H1 (cell line): ENCODE measurements at regions of chr1 and their contacts with region 1.

Region 1: DNA sequence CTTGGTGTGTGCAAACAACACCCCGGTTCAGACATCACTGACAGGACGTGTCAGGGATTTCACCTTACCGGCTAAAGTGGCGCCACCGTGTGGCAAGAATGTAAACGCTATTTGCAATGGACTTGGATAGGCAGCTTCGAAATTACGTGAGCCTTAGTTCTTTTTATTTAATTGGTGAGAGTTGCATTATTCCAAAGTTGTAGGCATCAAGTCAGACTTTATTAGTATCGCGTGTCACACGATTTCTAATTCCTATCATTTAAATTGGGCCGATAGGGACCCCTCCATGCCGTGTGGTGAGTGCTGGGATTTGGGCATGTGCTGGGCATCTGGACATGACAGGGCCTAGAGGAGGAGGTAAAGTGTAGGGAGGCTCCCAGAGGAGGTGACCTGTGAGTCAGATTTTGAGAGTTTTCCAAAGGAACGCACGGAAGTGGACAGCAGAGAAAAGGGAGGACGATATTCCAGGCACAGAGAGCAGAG is 14.5 kb upstream of the CPT2 start:
- DNase-seq: peak; percentile 29 to 95
- H3K4me3 ChIP-seq: no peak overlapping the region
- H3K27ac ChIP-seq: no peak overlapping the region
- H3K4me1 ChIP-seq: no peaks in the 10 kb centered on the region; a peak in 1 of 7 replicates
- H3K27me3 ChIP-seq: no peaks in the 10 kb centered on the region; a peak in 3 of 7 replicates
- CTCF ChIP-seq: peak; percentile 70 to 92 (median 74)
- EP300 ChIP-seq: no peak
- POLR2A ChIP-seq: no peak
- RAD21 ChIP-seq: peak; percentile 61 to 77

Region 2: DNA sequence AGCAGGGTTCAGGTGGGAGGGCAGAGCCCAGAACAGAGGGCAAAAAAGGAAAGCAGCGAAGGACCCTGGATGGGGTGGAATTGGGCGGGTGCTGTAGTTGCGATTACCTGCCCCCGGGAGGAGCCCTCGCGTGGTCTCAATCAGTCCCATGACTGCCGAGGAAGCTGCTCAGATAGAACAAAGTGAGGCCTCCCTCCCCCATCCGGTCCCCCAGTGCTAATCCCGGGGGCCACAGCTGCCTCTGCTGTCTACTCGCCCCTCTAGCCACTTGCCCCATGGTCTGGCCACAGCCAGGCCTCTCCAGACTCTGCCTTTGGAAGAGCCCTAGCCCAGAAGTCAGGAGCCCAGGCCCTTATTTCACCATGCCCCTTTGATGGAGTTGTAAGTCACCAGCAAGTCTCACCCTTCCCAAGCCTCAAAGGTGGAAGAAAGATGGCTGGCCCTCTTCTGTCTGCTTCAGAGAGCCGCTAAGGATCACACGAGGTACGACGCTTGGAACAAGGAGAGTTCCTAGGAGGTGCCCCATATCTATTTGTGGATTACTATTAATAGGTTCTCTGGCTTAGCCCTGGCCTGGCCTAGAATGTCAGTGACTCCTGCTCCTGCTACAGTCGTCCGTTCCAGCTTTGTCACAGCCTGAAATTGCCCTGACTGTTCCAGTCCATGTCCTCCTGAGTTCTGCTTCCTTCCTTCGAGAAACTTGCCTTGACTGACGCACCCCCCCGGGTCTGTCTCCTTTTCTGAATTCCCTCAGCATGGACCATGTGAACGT is 277.0 kb before region 1 on chr1:
- CTCF ChIA-PET with region 1: interaction called, 19 read pairs
- POLR2A ChIA-PET with region 1: no interaction called
- DNase-seq: peak; percentile 38 to 81
- H3K4me3 ChIP-seq: no peak overlapping the region
- H3K27ac ChIP-seq: no peak overlapping the region
- H3K4me1 ChIP-seq: peaks cover 0 to 10% (median 3%) of the 10 kb centered on the region in 4 experiments; a peak in 5 of 7 replicates
- H3K27me3 ChIP-seq: no peaks in the 10 kb centered on the region
- CTCF ChIP-seq: peak; percentile 68 to 77 (median 72)
- EP300 ChIP-seq: no peak
- POLR2A ChIP-seq: no peak
- RAD21 ChIP-seq: peak; percentile 67 to 70

Region 3: DNA sequence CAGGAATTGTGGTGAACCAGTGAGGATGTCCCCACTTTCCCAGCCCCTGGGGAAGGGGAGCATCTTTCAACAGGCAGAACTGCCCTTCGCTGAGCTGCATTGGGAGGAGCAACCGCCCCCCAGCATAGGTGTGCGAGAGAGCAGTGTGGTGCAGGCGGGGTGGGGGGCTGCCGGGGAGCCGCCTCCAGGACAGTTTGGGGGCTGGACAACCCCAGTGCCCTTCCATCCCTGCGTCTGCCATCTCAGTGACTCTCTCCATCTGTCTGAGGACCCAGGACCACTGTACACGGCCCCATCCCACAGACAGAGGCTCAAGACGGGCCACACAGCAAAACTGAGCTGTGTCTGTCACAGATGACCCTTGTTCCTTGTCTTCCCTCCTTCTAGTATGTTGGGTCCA is 106.0 kb before region 1 on chr1:
- CTCF ChIA-PET with region 1: interaction called, 11 read pairs
- POLR2A ChIA-PET with region 1: no interaction called
- DNase-seq: no peak
- H3K4me3 ChIP-seq: no peak overlapping the region
- H3K27ac ChIP-seq: no peak overlapping the region
- H3K4me1 ChIP-seq: peaks cover 0 to under 1% (median 0%) of the 10 kb centered on the region in 4 experiments; a peak in 2 of 7 replicates
- H3K27me3 ChIP-seq: no peaks in the 10 kb centered on the region
- CTCF ChIP-seq: no peak
- EP300 ChIP-seq: no peak
- POLR2A ChIP-seq: no peak
- RAD21 ChIP-seq: no peak

Region 4: DNA sequence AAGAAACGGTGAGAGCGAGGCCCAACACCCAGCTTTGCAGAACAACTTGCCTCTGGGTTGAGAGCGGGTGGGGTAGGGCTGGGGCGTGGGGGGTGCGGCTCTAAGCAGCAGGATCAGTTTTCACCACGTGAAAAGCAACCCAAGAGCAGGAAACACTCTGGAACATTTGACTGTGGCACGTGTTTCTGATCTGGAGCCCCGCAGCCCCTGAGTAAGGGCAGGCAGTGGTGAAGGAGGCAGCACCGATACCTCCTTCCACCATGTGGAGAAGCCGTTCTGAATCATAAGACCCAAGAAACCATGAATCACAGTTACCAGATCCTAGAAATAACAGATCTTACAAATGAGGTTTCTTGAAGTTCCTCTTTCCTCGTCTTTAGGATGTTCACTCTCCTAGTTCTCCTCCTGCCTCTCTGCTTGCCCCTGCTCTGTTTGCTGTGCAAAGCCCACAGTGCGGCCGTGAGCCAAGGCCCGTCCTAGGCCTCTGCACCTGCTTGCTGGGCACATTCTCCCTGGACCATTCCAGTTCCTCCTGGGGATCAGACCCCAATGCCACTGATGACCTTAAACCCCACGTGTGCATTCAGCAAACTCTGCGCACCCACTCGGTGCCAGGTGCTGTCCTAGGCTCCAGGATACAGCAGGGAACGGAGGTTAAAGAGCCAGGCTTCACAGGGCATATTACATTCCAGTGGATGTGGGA is 71.6 kb before region 1 on chr1:
- CTCF ChIA-PET with region 1: interaction called, 11 read pairs
- POLR2A ChIA-PET with region 1: no interaction called
- DNase-seq: no peak
- H3K4me3 ChIP-seq: no peak overlapping the region
- H3K27ac ChIP-seq: no peak overlapping the region
- H3K4me1 ChIP-seq: peaks cover 0 to 7% (median under 1%) of the 10 kb centered on the region in 4 experiments; a peak in 2 of 7 replicates
- H3K27me3 ChIP-seq: peaks cover 0 to 3% (median 0%) of the 10 kb centered on the region in 4 experiments; a peak in 1 of 7 replicates
- CTCF ChIP-seq: no peak
- EP300 ChIP-seq: no peak
- POLR2A ChIP-seq: no peak
- RAD21 ChIP-seq: no peak

Region 5: DNA sequence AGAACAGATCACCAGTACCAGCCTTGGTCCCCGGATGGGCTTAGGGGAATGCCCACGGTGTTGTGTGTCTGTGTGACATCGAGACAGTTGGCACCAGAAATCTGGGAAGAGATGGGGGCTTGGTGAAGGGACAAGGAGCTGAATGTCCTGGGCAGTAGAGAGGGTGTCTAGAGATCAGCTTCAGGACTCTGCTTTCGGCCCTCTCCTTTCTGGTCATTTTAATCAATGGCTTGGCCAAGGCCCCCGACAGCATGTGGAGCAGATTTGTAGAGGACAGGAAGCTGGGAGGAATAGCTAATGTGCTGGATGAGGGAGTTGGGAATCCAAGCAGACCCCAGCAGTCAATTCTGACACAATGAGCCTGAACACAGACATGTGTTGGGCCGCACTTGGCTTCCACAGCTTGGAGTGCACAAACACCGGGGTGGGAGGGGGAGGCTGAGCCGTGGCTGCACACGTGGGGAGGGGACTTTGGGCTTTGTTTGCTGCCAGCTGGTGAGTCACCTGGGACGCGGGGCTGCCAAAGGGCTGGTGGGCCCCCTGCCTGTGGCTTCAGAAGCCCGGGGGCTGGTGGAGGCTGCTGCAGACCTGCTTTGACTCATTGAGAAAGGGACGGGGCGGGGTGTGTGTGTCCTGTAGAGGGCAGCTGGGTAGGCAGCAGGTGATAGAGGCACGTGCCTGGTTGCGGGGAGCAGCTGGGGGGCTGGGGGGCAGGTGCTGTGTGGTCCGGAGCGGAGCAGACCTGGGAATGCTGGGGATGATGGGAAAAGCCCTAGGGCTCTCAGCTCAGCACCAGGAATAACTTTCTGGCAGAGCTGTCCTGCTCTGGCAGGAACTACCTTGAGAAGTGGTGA is 60.6 kb before region 1 on chr1:
- CTCF ChIA-PET with region 1: interaction called, 13 read pairs
- POLR2A ChIA-PET with region 1: interaction called, 3 read pairs
- DNase-seq: no peak
- H3K4me3 ChIP-seq: no peak overlapping the region
- H3K27ac ChIP-seq: no peak overlapping the region
- H3K4me1 ChIP-seq: peaks cover 0 to 26% (median 8%) of the 10 kb centered on the region in 4 experiments; a peak in 6 of 7 replicates
- H3K27me3 ChIP-seq: no peaks in the 10 kb centered on the region; a peak in 2 of 7 replicates
- CTCF ChIP-seq: no peak
- EP300 ChIP-seq: no peak
- POLR2A ChIP-seq: no peak
- RAD21 ChIP-seq: no peak

Region 6: GRCh38 chr1:53165408-53165961 is 16.7 kb before region 1 on chr1:
- CTCF ChIA-PET with region 1: interaction called, 51 read pairs
- POLR2A ChIA-PET with region 1: interaction called, 4 read pairs
- DNase-seq: no peak
- H3K4me3 ChIP-seq: no peak overlapping the region
- H3K27ac ChIP-seq: no peak overlapping the region
- H3K4me1 ChIP-seq: peaks cover 0 to 12% (median 6%) of the 10 kb centered on the region in 4 experiments; a peak in 3 of 7 replicates
- H3K27me3 ChIP-seq: no peaks in the 10 kb centered on the region
- CTCF ChIP-seq: no peak
- EP300 ChIP-seq: no peak
- POLR2A ChIP-seq: no peak
- RAD21 ChIP-seq: no peak

Region 7: DNA sequence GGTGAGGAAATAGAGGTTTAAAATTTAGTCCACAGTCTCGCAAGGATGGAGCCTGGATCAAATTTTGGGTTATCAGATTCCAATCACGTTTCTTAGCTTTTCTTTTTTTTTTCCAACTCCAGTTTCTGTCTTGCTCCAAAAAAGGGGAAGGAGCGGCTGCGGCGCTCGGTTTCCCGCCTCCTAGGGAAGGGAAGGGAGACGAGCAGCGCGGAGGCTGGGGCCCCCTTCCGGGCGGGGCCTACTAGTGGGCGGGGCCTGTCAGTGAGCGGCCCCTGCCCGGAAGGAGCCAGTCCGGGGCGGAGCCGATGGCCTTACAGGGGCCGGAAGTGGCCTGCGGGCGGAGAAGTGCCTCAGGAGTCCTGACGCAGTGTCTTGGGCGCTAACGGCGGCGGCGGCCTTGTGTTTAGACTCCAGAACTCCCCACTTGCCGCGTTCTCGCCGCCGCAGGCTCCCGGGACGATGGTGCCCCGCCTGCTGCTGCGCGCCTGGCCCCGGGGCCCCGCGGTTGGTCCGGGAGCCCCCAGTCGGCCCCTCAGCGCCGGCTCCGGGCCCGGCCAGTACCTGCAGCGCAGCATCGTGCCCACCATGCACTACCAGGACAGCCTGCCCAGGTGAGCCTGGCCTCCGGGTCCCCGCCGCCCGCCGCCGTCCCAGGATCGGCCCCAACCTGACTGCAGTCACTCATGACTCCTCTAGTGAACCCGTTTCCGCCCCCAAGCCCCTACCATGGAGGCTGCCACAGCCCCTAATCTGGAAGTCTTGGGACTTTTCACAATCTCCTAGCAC is 14.5 kb after region 1 on chr1 and contains the start of gene CPT2:
- CTCF ChIA-PET with region 1: interaction called, 42 read pairs
- POLR2A ChIA-PET with region 1: no interaction called
- DNase-seq: peak; percentile 84 to 90
- H3K4me3 ChIP-seq: peak within 1 kb of the TSS; percentile 73 to 93 (median 88)
- H3K27ac ChIP-seq: peak within 1 kb of the TSS; percentile 61; the same call in 1 of the 2 replicates
- H3K4me1 ChIP-seq: peaks cover 2 to 6% (median 4%) of the 10 kb centered on the region in 4 experiments; a peak in 4 of 7 replicates
- H3K27me3 ChIP-seq: peaks cover 0 to 4% (median 1%) of the 10 kb centered on the region in 4 experiments; a peak in 4 of 7 replicates
- CTCF ChIP-seq: 0 out of 4 replicates have a peak, but pooled peaks of 1 of the 3 experiments have one; percentile 12
- EP300 ChIP-seq: no peak
- POLR2A ChIP-seq: peak; percentile 79 to 90
- RAD21 ChIP-seq: no peak
- total RNA-seq, gene CPT2: 21.6 and 23.9 TPM in 2 replicates